Naive thymus-derived CD4-positive, alpha-beta T cell (primary cell): ENCODE measurements at regions of chr9 and their contacts with region 1.

Region 1: GRCh38 chr9:385818-386398 is 171.2 kb downstream of the DOCK8 start:
- DNase-seq: peak in 4 of 9 donors; percentile 8 to 19 (median 14)
- ATAC-seq: peak; percentile 57
- H3K4me3 ChIP-seq: no peak overlapping the region
- H3K4me3 Mint-ChIP-seq: no peak overlapping the region
- H3K27ac ChIP-seq: no peak overlapping the region
- H3K27ac Mint-ChIP-seq: peak overlapping the region in 1 of 9 donors; percentile 62
- H3K4me1 ChIP-seq: no peaks in the 10 kb centered on the region
- H3K4me1 Mint-ChIP-seq: peaks cover 0 to 4% (median 0%) of the 10 kb centered on the region in 7 donors
- H3K27me3 ChIP-seq: no peaks in the 10 kb centered on the region
- H3K27me3 Mint-ChIP-seq: no peaks in the 10 kb centered on the region

Region 2: GRCh38 chr9:757246-757881 is 371.5 kb after region 1 on chr9:
- CTCF ChIA-PET with region 1: no interaction called
- POLR2A ChIA-PET with region 1: no interaction called
- intact Hi-C with region 1: loop called in 1 of 2 experiments (anchors 5 kb)
- DNase-seq: peak in 1 of 9 donors; percentile 4
- ATAC-seq: peak; percentile 40
- H3K4me3 ChIP-seq: no peak overlapping the region
- H3K4me3 Mint-ChIP-seq: no peak overlapping the region
- H3K27ac ChIP-seq: no peak overlapping the region
- H3K27ac Mint-ChIP-seq: no peak overlapping the region
- H3K4me1 ChIP-seq: no peaks in the 10 kb centered on the region
- H3K4me1 Mint-ChIP-seq: peaks cover 0 to 22% (median 0%) of the 10 kb centered on the region in 7 donors
- H3K27me3 ChIP-seq: no peaks in the 10 kb centered on the region
- H3K27me3 Mint-ChIP-seq: peaks cover 0 to 10% (median 5%) of the 10 kb centered on the region in 5 donors

Region 3: DNA sequence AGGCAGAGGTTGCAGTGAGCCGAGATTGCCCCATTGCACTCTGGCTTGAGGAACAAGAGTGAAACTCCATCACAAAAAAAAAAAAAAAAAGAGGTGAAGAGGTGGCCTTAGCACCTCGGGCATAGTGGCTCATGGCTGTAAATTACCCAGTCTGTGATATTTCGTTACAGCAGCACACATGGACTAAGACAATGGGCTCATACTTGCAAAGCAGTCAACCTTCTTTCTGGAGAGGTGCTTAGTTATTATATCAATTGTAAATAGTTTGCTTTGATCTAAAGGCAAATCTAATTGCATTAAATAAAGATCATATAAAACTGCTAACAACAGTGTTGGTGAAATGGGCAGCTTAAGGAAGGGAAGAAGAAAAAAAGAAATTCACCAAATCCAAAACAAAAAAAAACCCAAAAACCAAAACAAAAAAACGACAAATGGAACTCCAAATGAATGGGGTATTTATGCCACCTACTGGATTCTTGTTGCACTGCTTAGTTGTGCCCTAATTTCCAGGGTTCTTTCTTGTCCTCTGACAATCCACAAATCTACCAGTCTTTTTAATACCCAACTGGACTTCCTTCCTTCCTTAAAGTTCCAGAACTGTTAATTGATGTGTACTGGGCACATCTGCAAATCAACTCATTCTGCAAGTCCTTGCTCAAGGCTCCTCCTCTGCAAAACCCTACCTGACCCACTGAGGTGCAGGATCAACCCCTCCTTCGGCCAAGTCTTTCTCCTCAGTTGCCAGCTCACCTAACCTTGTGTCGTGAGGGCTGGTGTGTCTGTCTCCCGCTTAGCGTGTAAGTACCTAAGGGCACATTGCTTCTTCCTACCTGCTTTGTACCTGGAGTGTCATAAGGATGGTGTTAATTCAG is 420.6 kb after region 1 on chr9:
- CTCF ChIA-PET with region 1: no interaction called
- POLR2A ChIA-PET with region 1: interaction called, 4 read pairs
- intact Hi-C with region 1: loop called in 1 of 2 experiments (anchors 1 kb)
- DNase-seq: peak in 4 of 9 donors; percentile 12 to 35 (median 29)
- ATAC-seq: peak; percentile 41
- H3K4me3 ChIP-seq: no peak overlapping the region
- H3K4me3 Mint-ChIP-seq: no peak overlapping the region
- H3K27ac ChIP-seq: no peak overlapping the region
- H3K27ac Mint-ChIP-seq: no peak overlapping the region
- H3K4me1 ChIP-seq: no peaks in the 10 kb centered on the region
- H3K4me1 Mint-ChIP-seq: no peaks in the 10 kb centered on the region
- H3K27me3 ChIP-seq: no peaks in the 10 kb centered on the region
- H3K27me3 Mint-ChIP-seq: peaks cover 5 to 27% (median 10%) of the 10 kb centered on the region in 5 donors

Region 4: GRCh38 chr9:1009101-1009707 is 623.3 kb after region 1 on chr9:
- CTCF ChIA-PET with region 1: no interaction called
- POLR2A ChIA-PET with region 1: no interaction called
- intact Hi-C with region 1: loop called in 1 of 2 experiments (anchors 5 kb)
- DNase-seq: peak; percentile 37 to 76 (median 58)
- ATAC-seq: peak; percentile 92
- H3K4me3 ChIP-seq: no peak overlapping the region
- H3K4me3 Mint-ChIP-seq: no peak overlapping the region
- H3K27ac ChIP-seq: no peak overlapping the region
- H3K27ac Mint-ChIP-seq: no peak overlapping the region
- H3K4me1 ChIP-seq: no peaks in the 10 kb centered on the region
- H3K4me1 Mint-ChIP-seq: peaks cover 0 to 10% (median 0%) of the 10 kb centered on the region in 7 donors
- H3K27me3 ChIP-seq: no peaks in the 10 kb centered on the region
- H3K27me3 Mint-ChIP-seq: peaks cover 15 to 43% (median 34%) of the 10 kb centered on the region in 5 donors